ENCODE measurements at regions of chr1 and their contacts with region 1.

Region 1: DNA sequence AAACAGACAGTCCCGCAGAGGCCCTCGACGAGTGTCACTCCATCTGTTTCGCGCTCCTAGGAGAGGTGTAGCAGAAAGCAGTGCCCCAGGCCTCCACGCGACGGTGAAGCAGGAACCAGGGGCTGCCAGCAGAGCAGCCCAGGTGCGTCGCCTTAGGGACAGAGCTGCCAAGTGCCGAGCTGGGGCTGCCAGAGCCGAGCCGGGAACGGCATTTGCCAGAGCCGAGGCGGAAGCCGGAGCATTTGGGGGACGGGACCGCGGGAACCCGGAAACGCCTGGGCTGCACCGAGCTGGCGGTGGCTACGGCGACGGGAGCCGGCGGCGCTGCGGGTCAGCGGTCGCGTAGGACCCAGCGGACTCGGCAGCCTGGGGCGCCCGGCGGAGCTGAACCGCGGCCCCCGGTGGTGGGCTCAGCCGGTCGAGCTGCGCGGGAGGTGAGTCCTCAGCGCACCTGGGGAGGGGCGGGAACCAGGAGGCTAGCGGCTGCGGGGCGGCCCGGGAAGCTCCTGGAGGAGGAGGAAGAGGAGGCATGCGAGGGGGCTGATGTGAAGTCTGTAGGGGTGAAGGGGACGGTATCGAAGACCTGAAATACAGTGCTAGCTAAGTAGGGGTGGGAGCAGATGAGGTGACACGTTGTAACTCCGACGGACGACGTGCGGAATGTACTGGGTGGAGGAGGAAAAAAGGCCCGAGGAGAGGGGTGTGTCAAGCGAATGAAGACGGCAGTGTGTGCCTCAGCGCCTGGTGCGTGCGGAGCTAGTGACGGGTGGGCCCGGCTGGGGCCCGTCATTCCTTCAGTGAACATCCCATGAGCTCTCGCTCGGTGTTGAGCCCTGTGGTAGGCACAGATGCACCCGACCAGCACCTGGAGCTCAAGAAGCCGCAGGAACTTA is at the start of gene SLC35A3:
- DNase-seq: peak; percentile 83
- ATAC-seq: peak; percentile 86
- H3K4me3 ChIP-seq: peak within 1 kb of the TSS; percentile 81
- H3K27ac ChIP-seq: peak within 1 kb of the TSS; percentile 65
- H3K4me1 ChIP-seq: peaks cover 46% of the 10 kb centered on the region
- H3K27me3 ChIP-seq: no peaks in the 10 kb centered on the region
- CTCF ChIP-seq: no peak
- total RNA-seq, gene SLC35A3: 31.4 and 46.5 TPM in 2 replicates

Region 2: DNA sequence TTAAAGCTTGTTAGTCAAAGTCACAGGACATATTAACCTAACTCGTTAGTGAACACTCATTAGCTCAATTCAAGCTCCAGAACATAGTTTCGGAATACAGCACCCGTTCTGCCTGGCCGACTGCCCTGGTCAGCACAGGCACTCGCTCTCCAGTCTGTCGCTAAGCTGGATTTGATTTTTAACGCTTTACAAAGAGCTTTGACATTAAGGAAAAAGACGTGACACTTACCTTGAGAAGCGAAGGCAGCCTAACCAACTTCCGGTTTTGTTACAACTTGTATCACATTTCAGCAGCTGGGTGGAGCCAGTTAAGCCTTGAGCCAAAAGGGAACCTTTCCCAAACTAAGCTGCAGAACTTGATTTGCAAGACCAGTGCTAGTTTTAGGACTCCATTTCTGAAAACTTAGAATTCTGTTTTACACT is 203.6 kb before region 1 on chr1 and contains the start of gene FRRS1:
- CTCF ChIA-PET with region 1: no interaction called
- POLR2A ChIA-PET with region 1: interaction called, 13 read pairs
- intact Hi-C with region 1: no loop called
- DNase-seq: peak; percentile 94
- ATAC-seq: peak; percentile 89
- H3K4me3 ChIP-seq: peak within 1 kb of the TSS; percentile 77
- H3K27ac ChIP-seq: peak within 1 kb of the TSS; percentile 70
- H3K4me1 ChIP-seq: peaks cover 17% of the 10 kb centered on the region
- H3K27me3 ChIP-seq: no peaks in the 10 kb centered on the region
- CTCF ChIP-seq: no peak
- total RNA-seq, gene FRRS1: 14.5 and 16.3 TPM in 2 replicates

Region 3: GRCh38 chr1:99849744-99850458 is 120.1 kb before region 1 on chr1 and contains the start of gene AGL:
- CTCF ChIA-PET with region 1: no interaction called
- POLR2A ChIA-PET with region 1: no interaction called
- intact Hi-C with region 1: loop called (anchors 2 kb)
- DNase-seq: peak; percentile 85
- ATAC-seq: peak; percentile 91
- H3K4me3 ChIP-seq: peak within 1 kb of the TSS; percentile 98
- H3K27ac ChIP-seq: peak within 1 kb of the TSS; percentile 48
- H3K4me1 ChIP-seq: peaks cover 17% of the 10 kb centered on the region; the same call in 1 of the 2 replicates
- H3K27me3 ChIP-seq: no peaks in the 10 kb centered on the region
- CTCF ChIP-seq: no peak
- total RNA-seq, gene AGL: 8.7 and 9.8 TPM in 2 replicates

Region 4: DNA sequence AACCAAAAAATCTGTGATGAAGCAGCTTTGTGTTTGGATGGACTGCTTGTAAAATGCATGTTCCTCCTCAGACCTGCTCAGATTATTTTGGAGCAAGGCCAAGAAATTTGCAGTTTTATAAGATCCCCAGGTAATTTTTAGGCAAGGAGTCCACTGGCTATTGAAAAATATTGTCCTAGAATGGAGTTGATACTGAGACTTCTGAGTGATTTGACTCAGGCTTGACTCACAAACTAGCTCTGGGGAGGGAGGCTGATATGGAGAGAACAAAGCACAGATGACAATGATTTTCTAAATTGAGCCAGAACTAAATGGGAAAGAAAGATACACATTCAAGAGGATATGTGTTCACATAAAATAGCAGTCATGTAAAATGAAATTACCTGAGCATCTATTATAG is 83.1 kb before region 1 on chr1:
- CTCF ChIA-PET with region 1: no interaction called
- POLR2A ChIA-PET with region 1: no interaction called
- intact Hi-C with region 1: loop called (anchors 5 kb)
- DNase-seq: peak; percentile 76
- ATAC-seq: peak; percentile 77
- H3K4me3 ChIP-seq: no peak overlapping the region
- H3K27ac ChIP-seq: no peak overlapping the region
- H3K4me1 ChIP-seq: peaks cover 26% of the 10 kb centered on the region
- H3K27me3 ChIP-seq: no peaks in the 10 kb centered on the region
- CTCF ChIP-seq: no peak